Activated CD4-positive, alpha-beta T cell treated with anti-CD3 and anti-CD28 coated beads for 36 hours (primary cell): ENCODE measurements at regions of chr13 and their contacts with region 1.

Region 1: DNA sequence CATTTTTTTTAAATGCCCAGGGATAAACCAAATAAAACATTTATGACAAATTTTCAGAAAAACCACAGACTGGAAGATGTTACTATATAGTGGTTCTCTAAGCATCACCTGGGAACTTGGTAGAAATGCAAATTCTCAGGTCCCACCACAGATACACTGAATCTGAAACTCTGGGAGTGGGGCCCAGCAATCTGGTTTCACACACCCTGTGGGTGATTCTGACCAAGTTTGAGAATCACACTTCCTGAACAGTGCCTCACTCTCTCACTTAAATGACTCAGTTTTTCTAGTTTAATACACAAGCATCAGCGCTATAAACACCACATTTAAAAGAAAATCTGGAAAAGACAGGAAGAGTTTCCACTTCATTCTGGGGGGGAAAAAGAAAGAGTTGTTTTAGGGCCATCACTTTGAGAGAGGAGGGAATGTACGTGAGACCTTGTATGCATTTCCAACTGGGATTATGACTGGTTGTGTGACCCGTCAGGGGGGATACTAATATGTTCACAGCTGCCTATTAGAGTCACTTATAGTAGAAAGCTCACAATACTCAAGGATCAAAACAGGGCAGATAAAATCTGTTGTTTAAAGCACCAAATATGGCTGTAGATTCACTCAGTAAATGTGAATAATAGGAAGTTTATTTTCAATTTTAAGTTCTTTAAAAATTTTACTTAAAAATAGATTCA is 567.7 kb downstream of the GPC6 start:
- DNase-seq: peak; percentile 76
- ATAC-seq: peak; percentile 96
- H3K4me3 Mint-ChIP-seq: no peak overlapping the region
- H3K27ac Mint-ChIP-seq: no peak overlapping the region
- H3K4me1 Mint-ChIP-seq: peaks cover 10% of the 10 kb centered on the region
- H3K27me3 Mint-ChIP-seq: peaks cover 31% of the 10 kb centered on the region

Region 2: GRCh38 chr13:93151277-93151676 is 643.1 kb before region 1 on chr13:
- CTCF ChIA-PET with region 1: no interaction called
- POLR2A ChIA-PET with region 1: no interaction called
- intact Hi-C with region 1: loop called in 1 of 2 experiments (anchors 5 kb)
- DNase-seq: no peak
- ATAC-seq: peak; percentile 91
- H3K4me3 Mint-ChIP-seq: no peak overlapping the region
- H3K27ac Mint-ChIP-seq: no peak overlapping the region
- H3K4me1 Mint-ChIP-seq: peaks cover 12% of the 10 kb centered on the region
- H3K27me3 Mint-ChIP-seq: no peaks in the 10 kb centered on the region

Region 3: GRCh38 chr13:93847173-93847572 is 52.8 kb after region 1 on chr13:
- CTCF ChIA-PET with region 1: no interaction called
- POLR2A ChIA-PET with region 1: no interaction called
- intact Hi-C with region 1: loop called in 1 of 2 experiments (anchors 1 kb)
- DNase-seq: no peak
- ATAC-seq: no peak
- H3K4me3 Mint-ChIP-seq: no peak overlapping the region
- H3K27ac Mint-ChIP-seq: no peak overlapping the region
- H3K4me1 Mint-ChIP-seq: peaks cover 3% of the 10 kb centered on the region
- H3K27me3 Mint-ChIP-seq: peaks cover 2% of the 10 kb centered on the region

Region 4: GRCh38 chr13:94239135-94239534 is 444.8 kb after region 1 on chr13:
- CTCF ChIA-PET with region 1: no interaction called
- POLR2A ChIA-PET with region 1: no interaction called
- intact Hi-C with region 1: loop called in 1 of 2 experiments (anchors 1 kb)
- DNase-seq: peak; percentile 23
- ATAC-seq: peak; percentile 68
- H3K4me3 Mint-ChIP-seq: no peak overlapping the region
- H3K27ac Mint-ChIP-seq: no peak overlapping the region
- H3K4me1 Mint-ChIP-seq: peaks cover 40% of the 10 kb centered on the region
- H3K27me3 Mint-ChIP-seq: no peaks in the 10 kb centered on the region

Region 5: DNA sequence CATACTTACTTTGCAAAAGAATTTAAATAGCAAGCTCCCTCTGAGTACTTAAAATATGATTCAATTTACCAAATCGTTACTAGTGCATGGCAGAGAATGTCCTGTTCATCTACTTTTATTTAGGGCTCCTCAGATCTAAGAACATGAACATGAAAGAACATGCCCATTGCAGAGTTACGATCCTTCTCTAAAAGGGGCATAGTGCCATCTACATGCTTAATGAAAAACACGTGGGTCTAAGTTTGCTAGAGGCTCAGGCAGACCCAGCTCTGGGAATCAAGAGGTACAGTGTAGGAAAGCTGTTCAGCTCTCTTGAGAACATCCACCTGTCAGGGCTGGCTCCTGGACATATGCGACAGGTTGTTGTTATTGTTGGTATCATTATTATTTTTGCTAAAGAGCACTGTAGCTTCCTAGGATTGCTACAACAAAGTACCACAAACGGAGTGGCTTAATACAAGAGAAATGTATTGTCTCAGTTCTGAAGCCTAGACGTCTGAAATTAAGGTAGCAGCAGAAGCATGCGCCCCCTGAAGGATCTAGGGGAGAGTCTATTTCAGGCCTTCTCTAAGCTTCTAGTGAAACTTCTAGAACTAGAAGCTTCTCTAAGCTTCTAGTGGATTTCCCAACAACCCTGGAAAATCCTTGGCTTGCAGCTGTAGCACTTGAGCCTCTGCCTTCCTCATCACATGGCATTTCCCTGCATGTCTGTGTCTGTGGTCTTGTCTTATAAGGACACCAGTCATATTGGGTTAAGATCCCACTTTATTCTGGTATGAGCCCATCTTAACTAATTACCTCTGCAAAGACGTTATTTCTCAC is 551.2 kb after region 1 on chr13:
- CTCF ChIA-PET with region 1: no interaction called
- POLR2A ChIA-PET with region 1: no interaction called
- intact Hi-C with region 1: loop called (anchors 2 kb)
- DNase-seq: no peak
- ATAC-seq: no peak
- H3K4me3 Mint-ChIP-seq: no peak overlapping the region
- H3K27ac Mint-ChIP-seq: no peak overlapping the region
- H3K4me1 Mint-ChIP-seq: peaks cover 23% of the 10 kb centered on the region
- H3K27me3 Mint-ChIP-seq: peaks cover 5% of the 10 kb centered on the region

Region 6: DNA sequence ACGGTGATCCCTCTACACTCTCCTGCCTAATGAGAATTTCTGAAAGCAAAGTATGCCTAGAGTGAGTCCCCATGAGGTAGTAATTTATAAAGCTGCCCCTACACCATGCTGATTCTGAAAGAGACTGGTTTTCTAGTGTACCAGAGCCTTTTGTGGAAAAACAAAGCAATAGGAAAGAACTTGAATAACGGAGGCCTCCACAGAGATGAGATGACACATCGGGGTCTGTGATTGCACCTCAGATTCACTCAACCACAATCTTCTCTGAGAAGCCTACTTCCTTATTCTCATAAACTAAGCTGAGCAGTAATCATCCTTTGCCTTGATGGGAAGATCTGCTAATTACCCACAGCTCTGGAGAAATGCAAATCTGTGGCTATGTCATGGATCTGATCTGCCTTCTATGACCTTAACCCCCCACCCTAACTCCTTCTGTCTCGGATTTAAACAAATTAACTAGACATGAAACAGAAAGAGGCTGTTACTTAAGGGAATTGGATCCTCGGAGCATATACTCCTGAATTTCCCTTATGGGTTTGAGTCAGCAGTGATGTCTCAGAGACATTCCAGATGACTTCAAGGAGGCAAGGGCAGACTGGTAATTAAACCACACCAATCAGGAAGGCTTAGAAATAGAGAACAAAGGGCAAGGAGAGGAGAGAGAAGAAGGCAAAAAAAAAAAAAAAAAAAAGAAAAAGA is 557.1 kb after region 1 on chr13:
- CTCF ChIA-PET with region 1: no interaction called
- POLR2A ChIA-PET with region 1: no interaction called
- intact Hi-C with region 1: loop called (anchors 2 kb)
- DNase-seq: peak; percentile 34
- ATAC-seq: peak; percentile 73
- H3K4me3 Mint-ChIP-seq: no peak overlapping the region
- H3K27ac Mint-ChIP-seq: peak overlapping the region; percentile 59
- H3K4me1 Mint-ChIP-seq: peaks cover 26% of the 10 kb centered on the region
- H3K27me3 Mint-ChIP-seq: peaks cover 7% of the 10 kb centered on the region